ENCODE measurements at regions of chr1 and their contacts with region 1.

Region 1: DNA sequence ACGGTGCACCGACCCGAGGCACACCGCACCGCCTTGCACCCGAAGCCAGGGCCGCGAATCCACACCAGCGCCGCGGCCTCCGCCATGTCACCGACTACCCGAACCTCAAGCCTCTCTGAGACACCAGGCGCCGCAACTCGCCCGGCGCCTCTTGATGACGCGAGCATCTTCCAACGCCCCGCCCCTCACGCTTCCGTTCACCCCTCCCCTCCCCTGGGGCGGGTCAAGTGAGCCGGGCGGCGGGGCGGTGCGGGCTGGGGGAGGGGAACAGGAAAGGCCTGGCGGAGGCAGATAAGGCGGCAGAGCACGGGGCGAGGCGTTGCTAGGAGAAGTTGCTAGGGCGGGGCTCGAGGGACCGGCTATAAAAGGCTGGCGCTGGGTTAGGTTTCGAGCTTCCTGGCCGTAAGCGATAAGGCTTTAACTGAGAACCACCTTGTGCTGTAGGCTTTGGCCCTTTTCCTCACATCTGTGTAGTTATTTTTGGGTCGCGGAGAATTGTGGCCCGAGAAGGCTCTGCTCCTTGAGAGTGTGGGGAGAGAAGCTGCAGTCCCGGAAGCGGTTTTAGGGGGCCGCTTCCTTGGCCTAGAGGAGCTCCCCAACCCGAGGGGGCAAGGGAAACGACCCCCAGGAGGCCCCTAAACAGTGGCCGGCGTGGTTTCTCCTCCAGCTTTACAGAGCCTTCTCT is at the start of gene SDE2:
- DNase-seq: peak; percentile 99 to 100 (median 100)
- H3K4me3 ChIP-seq: peak within 1 kb of the TSS; percentile 78 to 99
- H3K4me3 Mint-ChIP-seq: peak within 1 kb of the TSS; percentile 99 to 100 (median 100)
- H3K27ac ChIP-seq: peak within 1 kb of the TSS; percentile 98
- H3K27ac Mint-ChIP-seq: peak within 1 kb of the TSS; percentile 100
- H3K4me1 ChIP-seq: peaks cover 81% of the 10 kb centered on the region
- H3K4me1 Mint-ChIP-seq: peaks cover 44 to 78% (median 61%) of the 10 kb centered on the region in 4 donors
- H3K27me3 ChIP-seq: no peaks in the 10 kb centered on the region
- H3K27me3 Mint-ChIP-seq: no peaks in the 10 kb centered on the region
- total RNA-seq, gene SDE2: 21.1 to 21.2 TPM

Region 2: DNA sequence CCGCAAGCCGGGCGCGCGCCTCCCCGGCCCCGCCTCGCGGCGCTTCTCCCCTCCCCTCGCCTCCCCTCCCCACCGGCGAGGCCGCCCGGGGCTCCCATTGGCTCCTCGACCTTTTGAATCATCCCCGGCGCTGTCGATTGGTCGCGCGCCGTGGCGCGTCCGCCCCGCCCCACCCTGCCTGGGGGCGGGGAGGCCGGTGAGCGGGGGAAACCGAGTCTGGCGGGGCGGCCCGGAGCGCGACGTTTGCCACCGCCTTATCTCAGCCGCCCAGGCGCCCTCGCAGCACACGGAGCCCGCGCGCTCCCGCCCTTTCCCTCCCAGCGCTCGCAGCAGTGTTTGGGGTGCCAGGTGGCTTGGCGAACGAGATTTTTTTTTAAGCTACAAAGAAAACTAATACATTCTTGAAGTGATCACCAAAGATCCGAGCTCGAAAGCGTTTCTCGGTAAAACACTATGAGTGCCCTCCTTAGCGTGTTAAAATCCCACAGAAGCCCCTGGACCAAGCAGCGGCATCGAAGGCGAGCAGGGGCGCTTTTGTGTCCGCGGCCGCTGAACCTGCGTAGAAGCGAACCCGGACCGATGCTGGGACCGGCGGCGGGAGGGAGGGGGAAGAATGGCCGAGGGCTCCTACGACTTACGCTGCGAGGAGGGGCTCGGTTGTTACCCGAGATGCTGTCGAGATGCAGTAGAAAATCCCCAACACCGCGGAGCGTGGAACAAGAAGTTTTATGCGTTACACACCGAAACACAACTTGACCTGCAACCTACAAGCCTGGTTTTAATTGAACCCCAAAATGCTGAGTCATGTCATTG is 571.1 kb before region 1 on chr1:
- CTCF ChIA-PET with region 1: interaction called, 3 read pairs
- POLR2A ChIA-PET with region 1: interaction called, 30 read pairs
- intact Hi-C with region 1: loop called (anchors 1 kb)
- DNase-seq: peak; percentile 91 to 92 (median 91)
- H3K4me3 ChIP-seq: peak overlapping the region; percentile 68 to 75
- H3K4me3 Mint-ChIP-seq: peak overlapping the region; percentile 84 to 97 (median 92)
- H3K27ac ChIP-seq: peak overlapping the region; percentile 78
- H3K27ac Mint-ChIP-seq: peak overlapping the region; percentile 86 to 97 (median 96)
- H3K4me1 ChIP-seq: peaks cover 41% of the 10 kb centered on the region
- H3K4me1 Mint-ChIP-seq: peaks cover 38 to 49% (median 44%) of the 10 kb centered on the region in 4 donors
- H3K27me3 ChIP-seq: no peaks in the 10 kb centered on the region
- H3K27me3 Mint-ChIP-seq: no peaks in the 10 kb centered on the region

Region 3: GRCh38 chr1:225809842-225810578 is 189.4 kb before region 1 on chr1 and contains the start of gene EPHX1:
- CTCF ChIA-PET with region 1: no interaction called
- POLR2A ChIA-PET with region 1: no interaction called
- intact Hi-C with region 1: no loop called
- DNase-seq: peak; percentile 36 to 62 (median 52)
- H3K4me3 ChIP-seq: peak within 1 kb of the TSS; percentile 27 to 29
- H3K4me3 Mint-ChIP-seq: peak within 1 kb of the TSS; percentile 81 to 91 (median 86)
- H3K27ac ChIP-seq: no peak within 1 kb of the TSS
- H3K27ac Mint-ChIP-seq: peak within 1 kb of the TSS in 1 of 7 donors; percentile 84
- H3K4me1 ChIP-seq: peaks cover 11% of the 10 kb centered on the region
- H3K4me1 Mint-ChIP-seq: peaks cover 5 to 13% (median 6%) of the 10 kb centered on the region in 4 donors
- H3K27me3 ChIP-seq: no peaks in the 10 kb centered on the region
- H3K27me3 Mint-ChIP-seq: peaks cover 0 to 2% of the 10 kb centered on the region in 2 donors
- total RNA-seq, gene EPHX1: 2.1 to 3.0 TPM

Region 4: GRCh38 chr1:225881969-225882693 is 117.2 kb before region 1 on chr1 and contains the start of gene TMEM63A:
- CTCF ChIA-PET with region 1: no interaction called
- POLR2A ChIA-PET with region 1: interaction called, 11 read pairs
- intact Hi-C with region 1: no loop called
- DNase-seq: peak; percentile 86 to 92 (median 88)
- H3K4me3 ChIP-seq: peak within 1 kb of the TSS; percentile 89 to 98
- H3K4me3 Mint-ChIP-seq: peak within 1 kb of the TSS; percentile 95 to 99 (median 98)
- H3K27ac ChIP-seq: peak within 1 kb of the TSS; percentile 84
- H3K27ac Mint-ChIP-seq: peak within 1 kb of the TSS; percentile 93 to 97 (median 96)
- H3K4me1 ChIP-seq: peaks cover 48% of the 10 kb centered on the region
- H3K4me1 Mint-ChIP-seq: peaks cover 37 to 57% (median 46%) of the 10 kb centered on the region in 4 donors
- H3K27me3 ChIP-seq: no peaks in the 10 kb centered on the region
- H3K27me3 Mint-ChIP-seq: no peaks in the 10 kb centered on the region
- total RNA-seq, gene TMEM63A: 476 to 507 TPM

Region 5: GRCh38 chr1:225923692-225924555 is 75.4 kb before region 1 on chr1 and contains the start of gene PYCR2:
- CTCF ChIA-PET with region 1: no interaction called
- POLR2A ChIA-PET with region 1: interaction called, 16 read pairs
- intact Hi-C with region 1: loop called (anchors 1 kb)
- DNase-seq: peak; percentile 93 to 96 (median 95)
- H3K4me3 ChIP-seq: peak within 1 kb of the TSS; percentile 94 to 96
- H3K4me3 Mint-ChIP-seq: peak within 1 kb of the TSS; percentile 90 to 97 (median 94)
- H3K27ac ChIP-seq: peak within 1 kb of the TSS; percentile 85
- H3K27ac Mint-ChIP-seq: peak within 1 kb of the TSS; percentile 90 to 97 (median 95)
- H3K4me1 ChIP-seq: peaks cover 68% of the 10 kb centered on the region
- H3K4me1 Mint-ChIP-seq: peaks cover 13 to 52% (median 28%) of the 10 kb centered on the region in 4 donors
- H3K27me3 ChIP-seq: no peaks in the 10 kb centered on the region
- H3K27me3 Mint-ChIP-seq: no peaks in the 10 kb centered on the region
- total RNA-seq, gene PYCR2: 102 to 116 TPM

Region 6: DNA sequence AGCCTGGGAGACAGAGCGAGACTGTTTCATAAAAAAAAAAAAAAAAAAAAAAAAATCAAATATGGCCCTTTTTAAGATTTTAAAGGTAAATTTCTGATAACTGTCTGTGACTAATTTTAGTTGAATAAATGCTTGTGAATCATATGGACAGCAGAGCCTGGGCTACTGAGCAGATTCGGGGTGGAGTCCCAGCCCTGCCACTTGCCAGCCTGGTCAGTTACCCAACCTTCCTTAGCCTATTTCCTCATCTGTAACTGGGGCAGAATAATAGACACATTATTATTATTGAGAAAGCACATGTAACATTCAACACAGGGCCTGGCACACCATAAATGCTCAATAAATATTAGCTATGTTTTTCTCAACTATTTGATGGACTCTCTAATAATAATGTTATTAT is 52.0 kb after region 1 on chr1:
- CTCF ChIA-PET with region 1: no interaction called
- POLR2A ChIA-PET with region 1: interaction called, 11 read pairs
- intact Hi-C with region 1: no loop called
- DNase-seq: no peak
- H3K4me3 ChIP-seq: no peak overlapping the region
- H3K4me3 Mint-ChIP-seq: no peak overlapping the region
- H3K27ac ChIP-seq: no peak overlapping the region
- H3K27ac Mint-ChIP-seq: peak overlapping the region in 1 of 7 donors; percentile 47
- H3K4me1 ChIP-seq: no peaks in the 10 kb centered on the region
- H3K4me1 Mint-ChIP-seq: peaks cover 0 to 4% (median 1%) of the 10 kb centered on the region in 4 donors
- H3K27me3 ChIP-seq: no peaks in the 10 kb centered on the region
- H3K27me3 Mint-ChIP-seq: no peaks in the 10 kb centered on the region

Region 7: GRCh38 chr1:226109829-226110248 is 110.5 kb after region 1 on chr1:
- CTCF ChIA-PET with region 1: no interaction called
- POLR2A ChIA-PET with region 1: interaction called, 15 read pairs
- intact Hi-C with region 1: no loop called
- DNase-seq: peak; percentile 54 to 79 (median 70)
- H3K4me3 ChIP-seq: peak overlapping the region; percentile 11 to 54
- H3K4me3 Mint-ChIP-seq: peak overlapping the region; percentile 90 to 94 (median 92)
- H3K27ac ChIP-seq: peak overlapping the region; percentile 59
- H3K27ac Mint-ChIP-seq: peak overlapping the region; percentile 76 to 94 (median 88)
- H3K4me1 ChIP-seq: peaks cover 13% of the 10 kb centered on the region
- H3K4me1 Mint-ChIP-seq: peaks cover 5 to 21% (median 11%) of the 10 kb centered on the region in 4 donors
- H3K27me3 ChIP-seq: no peaks in the 10 kb centered on the region
- H3K27me3 Mint-ChIP-seq: no peaks in the 10 kb centered on the region

Measured in CD4-positive, alpha-beta memory T cell (primary cell).